ENCODE measurements at regions of chr22 and their contacts with region 1.

Region 1: DNA sequence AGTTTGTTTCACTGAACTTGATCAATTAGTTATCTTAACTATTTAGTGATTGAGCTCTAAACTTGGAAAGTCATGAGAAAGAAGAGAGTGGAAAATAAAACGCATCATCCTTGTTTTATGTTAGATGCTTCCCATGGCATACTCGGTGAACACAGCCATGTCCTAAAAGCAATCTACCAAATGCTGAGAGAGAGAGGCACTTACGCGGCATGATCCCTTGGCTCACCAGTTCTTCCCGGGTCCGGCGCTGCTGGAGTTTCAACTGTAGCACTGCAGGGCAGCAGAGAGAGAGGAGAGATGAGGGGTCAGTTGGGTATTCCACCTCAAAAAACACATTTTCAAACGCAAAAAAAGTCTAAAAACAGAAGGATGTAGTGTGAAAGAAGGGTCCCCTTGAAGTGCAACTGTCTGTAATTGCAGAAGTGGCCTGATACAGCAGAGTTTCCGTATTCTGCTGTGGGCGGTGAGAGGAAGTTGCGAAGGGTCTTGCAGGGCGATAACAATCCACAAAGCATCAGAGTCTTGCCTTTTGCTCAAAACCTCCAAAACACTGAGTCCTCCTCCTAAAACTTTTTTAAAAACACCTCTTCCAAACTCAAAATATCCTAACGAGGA is 92.7 kb downstream of the SGSM3 start:
- DNase-seq: peak; percentile 77
- ATAC-seq: peak; percentile 83
- H3K4me3 Mint-ChIP-seq: peak overlapping the region; percentile 87
- H3K27ac Mint-ChIP-seq: peak overlapping the region; percentile 99
- H3K4me1 Mint-ChIP-seq: peaks cover 44% of the 10 kb centered on the region
- H3K27me3 Mint-ChIP-seq: no peaks in the 10 kb centered on the region

Region 2: DNA sequence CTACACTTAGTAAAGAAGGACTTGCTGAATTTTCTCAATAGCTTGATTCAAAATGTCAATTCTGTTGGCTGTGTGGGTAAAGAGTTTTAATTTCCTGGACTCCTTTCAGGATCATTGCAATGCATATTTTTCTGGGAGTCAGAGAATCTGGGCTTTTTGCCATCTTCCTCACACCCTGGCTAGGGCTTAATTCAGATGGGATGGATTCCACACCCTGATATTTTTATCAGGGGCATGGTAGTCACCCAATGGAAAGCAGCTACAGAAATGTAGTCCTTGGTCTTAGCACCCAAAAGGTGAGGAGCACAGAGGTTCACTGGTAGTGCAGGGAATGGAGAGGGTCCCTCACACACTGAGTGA is 13.5 kb before region 1 on chr22:
- CTCF ChIA-PET with region 1: interaction called, 18 read pairs
- DNase-seq: no peak
- ATAC-seq: no peak
- H3K4me3 Mint-ChIP-seq: no peak overlapping the region
- H3K27ac Mint-ChIP-seq: no peak overlapping the region
- H3K4me1 Mint-ChIP-seq: peaks cover 32% of the 10 kb centered on the region
- H3K27me3 Mint-ChIP-seq: no peaks in the 10 kb centered on the region

Region 3: DNA sequence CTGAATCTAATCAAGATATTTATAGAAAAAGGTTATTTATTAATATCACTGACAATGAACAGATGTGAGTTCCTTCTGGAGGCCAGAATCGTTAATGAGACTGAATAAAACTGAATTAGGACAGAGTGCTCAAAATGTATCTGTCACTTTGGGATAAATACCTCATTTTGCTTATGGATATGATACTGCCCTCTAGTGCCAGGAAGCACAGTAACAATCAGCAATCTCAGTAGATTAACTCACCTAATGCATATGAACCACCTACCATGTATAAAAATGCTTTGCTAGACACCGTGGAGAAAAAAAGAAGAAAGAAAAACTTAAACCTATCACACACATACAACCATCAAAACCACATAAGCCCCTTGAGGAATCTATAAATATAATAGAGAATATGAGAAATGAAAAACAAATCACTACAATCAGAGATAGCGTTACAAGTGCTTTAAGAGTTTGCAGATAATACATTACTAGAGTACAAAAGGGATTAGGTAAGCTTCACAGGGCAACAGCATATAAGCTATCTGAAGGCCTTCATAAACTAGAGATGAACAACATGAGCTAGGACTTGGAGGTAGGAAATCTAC is 24.6 kb after region 1 on chr22:
- CTCF ChIA-PET with region 1: interaction called, 16 read pairs
- DNase-seq: no peak
- ATAC-seq: peak; percentile 67
- H3K4me3 Mint-ChIP-seq: no peak overlapping the region
- H3K27ac Mint-ChIP-seq: no peak overlapping the region
- H3K4me1 Mint-ChIP-seq: peaks cover 15% of the 10 kb centered on the region
- H3K27me3 Mint-ChIP-seq: no peaks in the 10 kb centered on the region

Region 4: GRCh38 chr22:40560551-40560950 is 97.4 kb after region 1 on chr22:
- CTCF ChIA-PET with region 1: no interaction called
- DNase-seq: no peak
- ATAC-seq: no peak
- H3K4me3 Mint-ChIP-seq: no peak overlapping the region
- H3K27ac Mint-ChIP-seq: no peak overlapping the region
- H3K4me1 Mint-ChIP-seq: peaks cover 5% of the 10 kb centered on the region
- H3K27me3 Mint-ChIP-seq: no peaks in the 10 kb centered on the region

Measured in activated CD8-positive, alpha-beta memory T cell treated with anti-CD3 and anti-CD28 coated beads, Interleukin-2, amount 10 ng/mL, durations not matched to agents 7 days and 5 days (primary cell).